ENCODE measurements at regions of chr5 and their contacts with region 1.

Region 1: GRCh38 chr5:81425569-81425968 is 31.6 kb upstream of the ACOT12 start:
- DNase-seq: no peak
- ATAC-seq: peak; percentile 70
- H3K4me3 Mint-ChIP-seq: no peak overlapping the region
- H3K27ac Mint-ChIP-seq: no peak overlapping the region
- H3K4me1 Mint-ChIP-seq: peaks cover 16% of the 10 kb centered on the region
- H3K27me3 Mint-ChIP-seq: no peaks in the 10 kb centered on the region
- CTCF ChIP-seq: peak; percentile 83

Region 2: GRCh38 chr5:81525690-81526089 is 100.1 kb after region 1 on chr5:
- CTCF ChIA-PET with region 1: no interaction called
- POLR2A ChIA-PET with region 1: no interaction called
- intact Hi-C with region 1: no loop called
- DNase-seq: no peak
- ATAC-seq: peak; percentile 47
- H3K4me3 Mint-ChIP-seq: no peak overlapping the region
- H3K27ac Mint-ChIP-seq: peak overlapping the region; percentile 50
- H3K4me1 Mint-ChIP-seq: peaks cover 5% of the 10 kb centered on the region
- H3K27me3 Mint-ChIP-seq: no peaks in the 10 kb centered on the region
- CTCF ChIP-seq: no peak

Region 3: DNA sequence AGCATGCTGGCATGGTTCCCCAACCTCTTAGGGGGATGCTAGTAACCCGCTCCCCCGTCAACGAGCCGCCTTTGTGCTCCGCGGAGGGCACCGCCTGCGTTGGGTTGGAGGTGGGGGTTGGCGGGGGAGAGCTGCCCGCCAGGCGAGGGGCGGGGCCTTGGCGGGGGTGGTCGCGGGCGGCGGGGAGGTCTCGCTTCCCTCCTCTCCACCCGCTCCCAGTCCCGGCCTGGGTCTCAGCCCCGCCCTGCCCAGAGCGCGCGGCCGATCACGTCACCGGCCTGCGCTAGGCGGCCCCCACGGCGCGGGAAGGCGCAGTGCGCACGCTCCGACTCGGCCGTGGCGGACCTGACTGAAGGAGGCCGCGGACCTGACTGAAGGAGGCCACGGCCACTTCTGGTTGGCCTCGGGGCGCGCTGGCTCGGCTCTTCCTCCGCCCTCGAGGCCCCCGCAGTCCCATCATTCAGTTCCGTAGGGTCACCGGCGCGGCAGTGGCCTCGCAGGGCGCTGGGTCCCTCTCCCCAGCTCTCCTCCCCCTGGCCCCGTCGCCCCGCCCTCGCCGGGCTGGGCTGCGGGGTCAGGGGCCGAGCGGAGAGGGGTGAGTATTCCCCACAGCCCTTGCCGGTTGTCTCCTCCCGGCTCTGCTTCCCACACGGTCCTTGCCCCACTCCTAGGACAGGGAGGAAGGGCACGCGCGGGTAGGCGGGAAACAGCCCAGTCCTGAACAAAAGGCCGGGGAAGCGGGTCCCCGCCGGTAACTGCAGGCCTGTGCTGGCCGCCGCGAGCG is 546.3 kb after region 1 on chr5 and contains the start of gene ATG10:
- CTCF ChIA-PET with region 1: no interaction called
- POLR2A ChIA-PET with region 1: no interaction called
- intact Hi-C with region 1: loop called (anchors 10 kb)
- DNase-seq: peak; percentile 89
- ATAC-seq: peak; percentile 95
- H3K4me3 Mint-ChIP-seq: peak within 1 kb of the TSS; percentile 90
- H3K27ac Mint-ChIP-seq: peak within 1 kb of the TSS; percentile 95
- H3K4me1 Mint-ChIP-seq: peaks cover 23% of the 10 kb centered on the region
- H3K27me3 Mint-ChIP-seq: no peaks in the 10 kb centered on the region
- CTCF ChIP-seq: no peak
- total RNA-seq, gene ATG10: 7.5 to 12.0 TPM

Region 4: GRCh38 chr5:82165740-82166530 is 740.4 kb after region 1 on chr5:
- CTCF ChIA-PET with region 1: interaction called, 18 read pairs
- POLR2A ChIA-PET with region 1: no interaction called
- intact Hi-C with region 1: loop called (anchors 10 kb)
- DNase-seq: peak; percentile 47
- ATAC-seq: peak; percentile 95
- H3K4me3 Mint-ChIP-seq: no peak overlapping the region
- H3K27ac Mint-ChIP-seq: no peak overlapping the region
- H3K4me1 Mint-ChIP-seq: peaks cover 8% of the 10 kb centered on the region
- H3K27me3 Mint-ChIP-seq: no peaks in the 10 kb centered on the region
- CTCF ChIP-seq: peak; percentile 62

Region 5: DNA sequence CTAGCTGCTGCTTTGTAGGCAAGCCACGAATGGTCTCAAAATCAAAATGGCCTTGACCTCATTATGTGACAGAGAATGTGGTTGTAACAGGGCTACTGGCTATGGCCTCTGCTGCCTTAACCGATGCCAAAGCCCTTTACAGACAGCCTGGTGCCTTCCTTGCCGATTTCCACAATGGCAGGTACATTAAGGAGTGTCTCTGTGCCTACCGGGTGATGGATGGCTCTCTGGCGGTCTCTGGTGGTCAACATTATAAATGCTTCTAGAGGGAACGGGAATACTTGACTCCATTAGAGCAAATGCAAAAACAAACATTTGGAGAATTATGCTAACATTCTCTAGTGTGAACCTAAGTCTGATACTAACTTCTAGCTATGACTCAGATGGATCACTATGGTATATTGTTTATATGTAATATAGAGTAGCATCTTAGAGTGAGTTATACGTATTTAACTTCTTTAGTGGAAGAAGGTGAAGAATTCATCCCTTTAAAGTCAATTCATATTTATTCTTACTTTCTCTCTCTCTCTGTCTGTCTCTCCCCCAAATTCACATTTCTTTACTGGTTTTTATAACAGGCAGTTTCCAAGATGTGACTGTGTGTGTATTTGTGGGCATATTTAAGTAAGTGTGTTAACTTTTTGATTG is 800.1 kb after region 1 on chr5:
- CTCF ChIA-PET with region 1: interaction called, 24 read pairs
- POLR2A ChIA-PET with region 1: no interaction called
- intact Hi-C with region 1: loop called (anchors 5 kb)
- DNase-seq: peak; percentile 73
- ATAC-seq: peak; percentile 90
- H3K4me3 Mint-ChIP-seq: no peak overlapping the region
- H3K27ac Mint-ChIP-seq: no peak overlapping the region
- H3K4me1 Mint-ChIP-seq: peaks cover 3% of the 10 kb centered on the region
- H3K27me3 Mint-ChIP-seq: no peaks in the 10 kb centered on the region
- CTCF ChIP-seq: peak; percentile 86

Measured in activated CD8-positive, alpha-beta T cell treated with anti-CD3 and anti-CD28 coated beads for 36 hours (primary cell).